Natural killer cell (primary cell): ENCODE measurements at regions of chr16 and their contacts with region 1.

Region 1: GRCh38 chr16:4416200-4417032 is at the start of gene CORO7:
- DNase-seq: peak; percentile 98 to 99
- ATAC-seq: peak; percentile 81 to 94 (median 81)
- H3K4me3 ChIP-seq: peak within 1 kb of the TSS; percentile 49
- H3K4me3 Mint-ChIP-seq: peak within 1 kb of the TSS; percentile 95
- H3K27ac ChIP-seq: peak within 1 kb of the TSS; percentile 88
- H3K27ac Mint-ChIP-seq: peak within 1 kb of the TSS; percentile 92 to 95
- H3K4me1 ChIP-seq: peaks cover 49% of the 10 kb centered on the region
- H3K4me1 Mint-ChIP-seq: peaks cover 29 to 40% of the 10 kb centered on the region in 2 donors
- H3K27me3 ChIP-seq: no peaks in the 10 kb centered on the region
- H3K27me3 Mint-ChIP-seq: no peaks in the 10 kb centered on the region
- CTCF ChIP-seq: no peak
- total RNA-seq, gene CORO7: 335 to 425 (median 415) TPM

Region 2: DNA sequence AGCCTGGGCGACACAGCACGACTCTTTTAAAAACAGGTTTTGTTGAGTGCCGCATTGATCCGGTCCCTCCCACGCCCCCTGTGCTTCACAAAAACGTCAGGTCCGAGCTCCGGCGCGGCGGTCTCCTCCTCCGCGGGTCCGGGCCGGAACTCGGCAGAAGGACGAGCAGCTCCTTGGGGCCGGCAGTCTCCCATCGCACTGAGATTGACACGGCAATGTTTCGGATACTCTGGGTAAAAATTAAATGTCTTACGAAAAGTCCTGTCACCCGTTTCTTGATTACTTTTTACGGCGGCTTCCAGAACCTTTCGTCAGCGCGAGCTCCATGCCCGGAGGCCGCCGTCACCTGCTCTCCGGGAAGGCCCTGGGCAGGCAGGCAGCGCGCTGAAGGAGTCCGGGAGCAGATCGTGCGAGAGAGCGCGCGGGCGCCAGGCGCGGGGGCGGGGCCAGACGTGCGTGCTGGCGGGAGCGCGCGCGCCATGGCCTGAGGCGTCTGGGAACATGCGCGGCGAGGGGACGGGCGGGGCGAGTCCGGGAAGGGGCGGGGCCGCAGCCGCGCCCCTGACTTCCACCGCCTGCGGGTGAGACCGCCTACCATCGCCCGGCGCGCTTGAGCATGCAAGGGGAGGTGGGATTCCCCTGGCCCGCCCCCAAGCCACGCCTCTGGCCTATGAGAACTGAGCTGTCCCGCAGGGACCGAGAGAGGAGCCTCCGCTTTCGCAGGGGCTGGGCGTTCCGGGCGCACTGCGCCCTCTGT is 162.8 kb before region 1 on chr16:
- intact Hi-C with region 1: no loop called
- DNase-seq: peak; percentile 97 to 100
- ATAC-seq: peak; percentile 92 to 99 (median 92)
- H3K4me3 ChIP-seq: peak overlapping the region; percentile 69
- H3K4me3 Mint-ChIP-seq: peak overlapping the region; percentile 94
- H3K27ac ChIP-seq: peak overlapping the region; percentile 74
- H3K27ac Mint-ChIP-seq: peak overlapping the region; percentile 89 to 96
- H3K4me1 ChIP-seq: peaks cover 16% of the 10 kb centered on the region
- H3K4me1 Mint-ChIP-seq: peaks cover 0 to 9% of the 10 kb centered on the region in 2 donors
- H3K27me3 ChIP-seq: no peaks in the 10 kb centered on the region
- H3K27me3 Mint-ChIP-seq: no peaks in the 10 kb centered on the region
- CTCF ChIP-seq: no peak

Region 3: GRCh38 chr16:4377573-4378143 is 38.8 kb before region 1 on chr16:
- intact Hi-C with region 1: no loop called
- DNase-seq: no peak
- ATAC-seq: no peak
- H3K4me3 ChIP-seq: no peak overlapping the region
- H3K4me3 Mint-ChIP-seq: peak overlapping the region; percentile 9
- H3K27ac ChIP-seq: no peak overlapping the region
- H3K27ac Mint-ChIP-seq: peak overlapping the region; percentile 54 to 64
- H3K4me1 ChIP-seq: peaks cover 12% of the 10 kb centered on the region
- H3K4me1 Mint-ChIP-seq: peaks cover 0 to 24% of the 10 kb centered on the region in 2 donors
- H3K27me3 ChIP-seq: no peaks in the 10 kb centered on the region
- H3K27me3 Mint-ChIP-seq: no peaks in the 10 kb centered on the region
- CTCF ChIP-seq: no peak

Region 4: DNA sequence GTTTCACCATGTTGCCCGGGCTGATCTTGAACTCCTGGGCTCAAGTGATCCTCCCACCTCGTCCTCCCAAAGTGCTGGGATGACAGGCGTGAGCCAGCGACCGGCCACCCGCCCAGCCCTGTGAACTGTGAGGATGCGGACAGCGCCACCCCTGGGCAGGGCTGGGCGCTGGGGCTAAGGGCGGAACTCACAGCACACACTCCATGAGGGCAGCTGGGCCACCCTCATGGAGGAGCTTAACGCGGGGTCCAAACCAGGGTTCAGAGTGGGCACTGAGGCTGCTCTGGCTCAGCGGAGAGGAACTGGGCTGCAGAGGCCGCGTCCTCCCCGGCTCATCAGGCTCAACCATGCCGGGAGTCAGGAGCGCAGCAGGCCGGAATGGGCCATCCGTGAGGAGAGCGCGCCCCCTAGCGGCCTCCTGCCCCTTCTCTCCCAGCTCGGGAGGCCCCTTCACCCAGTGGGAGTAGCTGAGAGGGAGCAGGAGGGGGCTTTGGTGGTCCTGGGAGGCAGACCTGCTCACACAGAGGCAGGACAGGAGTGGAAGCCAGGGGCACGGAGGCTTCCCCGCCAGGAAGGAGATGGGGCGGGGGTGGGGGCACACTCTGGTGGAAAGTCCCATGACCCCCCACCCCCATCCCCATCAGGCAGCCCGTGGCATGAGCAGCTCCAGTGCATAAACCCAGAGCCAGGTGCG is 13.8 kb before region 1 on chr16:
- intact Hi-C with region 1: loop called (anchors 1 kb)
- DNase-seq: peak; percentile 68 to 74
- ATAC-seq: peak; percentile 55 to 61 (median 57)
- H3K4me3 ChIP-seq: no peak overlapping the region
- H3K4me3 Mint-ChIP-seq: no peak overlapping the region
- H3K27ac ChIP-seq: no peak overlapping the region
- H3K27ac Mint-ChIP-seq: peak overlapping the region in 1 of 2 donors; percentile 39
- H3K4me1 ChIP-seq: peaks cover 8% of the 10 kb centered on the region
- H3K4me1 Mint-ChIP-seq: peaks cover 11 to 38% of the 10 kb centered on the region in 2 donors
- H3K27me3 ChIP-seq: no peaks in the 10 kb centered on the region
- H3K27me3 Mint-ChIP-seq: no peaks in the 10 kb centered on the region
- CTCF ChIP-seq: peak; percentile 76

Region 5: GRCh38 chr16:4465977-4466779 is 49.8 kb after region 1 on chr16:
- intact Hi-C with region 1: loop called (anchors 2 kb)
- DNase-seq: peak; percentile 79 to 86
- ATAC-seq: peak; percentile 91 to 96 (median 96)
- H3K4me3 ChIP-seq: no peak overlapping the region
- H3K4me3 Mint-ChIP-seq: peak overlapping the region; percentile 74
- H3K27ac ChIP-seq: peak overlapping the region; percentile 94
- H3K27ac Mint-ChIP-seq: peak overlapping the region; percentile 97 to 98
- H3K4me1 ChIP-seq: peaks cover 40% of the 10 kb centered on the region
- H3K4me1 Mint-ChIP-seq: peaks cover 24 to 25% of the 10 kb centered on the region in 2 donors
- H3K27me3 ChIP-seq: no peaks in the 10 kb centered on the region
- H3K27me3 Mint-ChIP-seq: no peaks in the 10 kb centered on the region
- CTCF ChIP-seq: no peak

Region 6: GRCh38 chr16:4616047-4616811 is 199.8 kb after region 1 on chr16:
- intact Hi-C with region 1: loop called (anchors 10 kb)
- DNase-seq: peak; percentile 96 to 100
- ATAC-seq: peak; percentile 89 to 97 (median 90)
- H3K4me3 ChIP-seq: peak overlapping the region; percentile 49
- H3K4me3 Mint-ChIP-seq: peak overlapping the region; percentile 93
- H3K27ac ChIP-seq: peak overlapping the region; percentile 90
- H3K27ac Mint-ChIP-seq: peak overlapping the region; percentile 96 to 99
- H3K4me1 ChIP-seq: peaks cover 43% of the 10 kb centered on the region
- H3K4me1 Mint-ChIP-seq: peaks cover 14 to 28% of the 10 kb centered on the region in 2 donors
- H3K27me3 ChIP-seq: no peaks in the 10 kb centered on the region
- H3K27me3 Mint-ChIP-seq: no peaks in the 10 kb centered on the region
- CTCF ChIP-seq: peak; percentile 26

Region 7: GRCh38 chr16:4846891-4847773 is 430.7 kb after region 1 on chr16 and contains the starts of genes GLYR1 and UBN1:
- intact Hi-C with region 1: no loop called
- DNase-seq: peak; percentile 99 to 100
- ATAC-seq: peak; percentile 85 to 95 (median 89)
- H3K4me3 ChIP-seq: peak within 1 kb of the TSS; percentile 76
- H3K4me3 Mint-ChIP-seq: peak within 1 kb of the TSS; percentile 98
- H3K27ac ChIP-seq: peak within 1 kb of the TSS; percentile 96
- H3K27ac Mint-ChIP-seq: peak within 1 kb of the TSS; percentile 93 to 95
- H3K4me1 ChIP-seq: peaks cover 24% of the 10 kb centered on the region
- H3K4me1 Mint-ChIP-seq: peaks cover 50% of the 10 kb centered on the region in 2 donors
- H3K27me3 ChIP-seq: no peaks in the 10 kb centered on the region
- H3K27me3 Mint-ChIP-seq: no peaks in the 10 kb centered on the region
- CTCF ChIP-seq: no peak
- total RNA-seq, gene GLYR1: 112 to 129 (median 125) TPM
- total RNA-seq, gene UBN1: 70.5 to 81.6 (median 79.9) TPM